ENCODE measurements at regions of chr4 and their contacts with region 1.

Region 1: GRCh38 chr4:256492-256891 is 48.8 kb downstream of the ZNF732 start:
- DNase-seq: no peak
- ATAC-seq: no peak
- H3K4me3 ChIP-seq: no peak overlapping the region
- H3K27ac ChIP-seq: no peak overlapping the region
- H3K4me1 ChIP-seq: no peaks in the 10 kb centered on the region
- H3K27me3 ChIP-seq: no peaks in the 10 kb centered on the region

Region 2: GRCh38 chr4:373062-373839 is 116.8 kb after region 1 on chr4:
- intact Hi-C with region 1: loop called in 1 of 2 experiments (anchors 10 kb)
- DNase-seq: no peak
- ATAC-seq: no peak
- H3K4me3 ChIP-seq: no peak overlapping the region
- H3K27ac ChIP-seq: no peak overlapping the region
- H3K4me1 ChIP-seq: no peaks in the 10 kb centered on the region
- H3K27me3 ChIP-seq: no peaks in the 10 kb centered on the region

Region 3: DNA sequence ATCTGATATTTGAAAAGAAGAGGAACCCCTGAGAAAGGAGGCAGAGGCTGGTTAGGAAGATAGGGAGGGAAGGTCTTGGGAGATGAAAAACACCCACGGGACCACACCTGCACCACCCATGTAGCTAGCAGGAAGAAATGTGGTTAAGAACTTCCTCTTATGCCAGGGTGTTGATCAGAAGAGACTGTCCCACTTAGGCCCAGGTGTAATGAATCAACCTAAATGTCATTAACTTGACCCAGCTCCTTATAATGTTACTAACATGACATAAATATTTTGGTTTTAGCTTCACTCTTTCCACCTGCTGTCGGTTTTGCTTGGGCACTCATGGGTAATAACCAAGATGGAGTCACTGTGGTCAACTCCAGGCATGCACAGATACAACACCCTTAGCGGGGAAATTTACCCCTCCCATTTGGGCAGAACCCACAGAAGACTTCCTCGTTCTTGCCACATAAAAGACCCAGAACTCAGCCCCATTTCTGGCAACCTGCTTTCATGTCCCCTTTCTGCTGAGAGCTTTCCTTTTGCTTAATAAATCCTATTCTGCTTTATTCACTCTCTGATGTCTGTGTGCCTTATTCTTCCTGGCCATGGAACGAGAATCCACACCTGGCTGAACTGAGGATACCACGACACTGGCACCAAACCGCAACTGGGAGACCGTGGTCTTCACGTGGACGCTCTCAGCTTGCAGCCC is 128.0 kb after region 1 on chr4:
- intact Hi-C with region 1: no loop called
- DNase-seq: no peak
- ATAC-seq: no peak
- H3K4me3 ChIP-seq: no peak overlapping the region
- H3K27ac ChIP-seq: no peak overlapping the region
- H3K4me1 ChIP-seq: no peaks in the 10 kb centered on the region
- H3K27me3 ChIP-seq: no peaks in the 10 kb centered on the region

Region 4: GRCh38 chr4:445410-445809 is 188.9 kb after region 1 on chr4:
- intact Hi-C with region 1: loop called in 1 of 2 experiments (anchors 10 kb)
- DNase-seq: no peak
- ATAC-seq: no peak
- H3K4me3 ChIP-seq: no peak overlapping the region
- H3K27ac ChIP-seq: no peak overlapping the region
- H3K4me1 ChIP-seq: no peaks in the 10 kb centered on the region
- H3K27me3 ChIP-seq: no peaks in the 10 kb centered on the region

Region 5: GRCh38 chr4:1300466-1301455 is 1044.3 kb after region 1 on chr4:
- intact Hi-C with region 1: no loop called
- DNase-seq: peak; percentile 60 to 80
- ATAC-seq: peak; percentile 67
- H3K4me3 ChIP-seq: no peak overlapping the region
- H3K27ac ChIP-seq: no peak overlapping the region
- H3K4me1 ChIP-seq: no peaks in the 10 kb centered on the region
- H3K27me3 ChIP-seq: no peaks in the 10 kb centered on the region